K562 (cell line): ENCODE measurements at regions of chr6 and their contacts with region 1.

Region 1: DNA sequence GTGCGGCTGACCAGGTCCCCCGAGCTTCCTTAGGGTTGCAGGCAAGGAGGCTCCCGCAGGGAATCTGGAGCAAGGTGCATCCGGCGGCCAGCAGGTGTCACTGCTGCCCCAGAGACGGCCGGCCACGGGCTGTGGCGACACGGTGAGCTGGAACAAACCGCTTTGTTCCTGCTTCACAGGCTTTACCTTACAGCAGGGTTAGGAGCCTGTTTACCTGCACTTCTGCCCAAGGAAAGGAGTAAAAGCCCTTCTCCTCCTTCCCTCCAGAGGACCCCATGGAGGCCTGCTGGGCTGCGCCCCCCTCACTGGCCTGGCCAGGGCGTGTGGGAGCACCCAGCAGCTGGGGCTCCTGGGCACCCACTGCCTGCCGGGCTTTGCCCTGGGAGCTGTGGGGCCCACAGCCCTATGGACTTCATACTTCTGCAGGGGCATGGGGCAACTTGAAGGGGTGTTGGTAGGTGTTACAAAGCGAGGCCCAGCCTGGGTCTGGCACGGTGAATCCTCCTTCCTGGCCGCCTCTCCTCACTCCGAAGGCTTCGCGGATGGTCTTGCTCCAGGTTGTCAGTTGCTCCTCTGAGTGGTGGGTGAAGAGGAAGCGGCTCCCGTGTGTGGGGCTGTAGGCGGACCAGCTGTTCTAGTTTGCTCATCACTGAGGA is 88.4 kb downstream of the CDC5L start:
- DNase-seq: peak; percentile 91 to 92 (median 92)
- ATAC-seq: peak; percentile 87
- H3K4me3 ChIP-seq: no peak overlapping the region
- H3K27ac ChIP-seq: peak overlapping the region; percentile 48
- H3K4me1 ChIP-seq: peaks cover 35 to 47% of the 10 kb centered on the region in 2 experiments
- H3K27me3 ChIP-seq: peaks cover 21 to 36% of the 10 kb centered on the region in 2 experiments; a peak in 4 of 5 replicates
- CTCF ChIP-seq: peak; percentile 95 to 99 (median 98)
- EP300 ChIP-seq: peak; percentile 66
- POLR2A ChIP-seq: no peak
- RAD21 ChIP-seq: peak; percentile 97 to 99

Region 2: GRCh38 chr6:44569931-44570385 is 94.1 kb after region 1 on chr6:
- CTCF ChIA-PET with region 1: no interaction called
- POLR2A ChIA-PET with region 1: interaction called, 3 read pairs
- in situ Hi-C with region 1: no loop called
- intact Hi-C with region 1: loop called (anchors 10 kb)
- DNase-seq: no peak
- ATAC-seq: peak; percentile 40; the same call in 1 of the 3 replicates
- H3K4me3 ChIP-seq: no peak overlapping the region
- H3K27ac ChIP-seq: no peak overlapping the region
- H3K4me1 ChIP-seq: no peaks in the 10 kb centered on the region
- H3K27me3 ChIP-seq: peaks cover 0 to 12% of the 10 kb centered on the region in 2 experiments; a peak in 2 of 5 replicates
- CTCF ChIP-seq: no peak
- EP300 ChIP-seq: no peak
- POLR2A ChIP-seq: no peak
- RAD21 ChIP-seq: no peak

Region 3: GRCh38 chr6:44642870-44643529 is 167.1 kb after region 1 on chr6:
- CTCF ChIA-PET with region 1: no interaction called
- POLR2A ChIA-PET with region 1: interaction called, 5 read pairs
- in situ Hi-C with region 1: loop called (anchors 10 kb)
- intact Hi-C with region 1: loop called (anchors 5 kb)
- DNase-seq: peak in 1 of 4 experiments; percentile 26
- ATAC-seq: peak; percentile 57
- H3K4me3 ChIP-seq: no peak overlapping the region
- H3K27ac ChIP-seq: no peak overlapping the region
- H3K4me1 ChIP-seq: no peaks in the 10 kb centered on the region
- H3K27me3 ChIP-seq: peaks cover 24 to 49% of the 10 kb centered on the region in 2 experiments
- CTCF ChIP-seq: no peak
- EP300 ChIP-seq: no peak
- POLR2A ChIP-seq: no peak
- RAD21 ChIP-seq: no peak

Region 4: DNA sequence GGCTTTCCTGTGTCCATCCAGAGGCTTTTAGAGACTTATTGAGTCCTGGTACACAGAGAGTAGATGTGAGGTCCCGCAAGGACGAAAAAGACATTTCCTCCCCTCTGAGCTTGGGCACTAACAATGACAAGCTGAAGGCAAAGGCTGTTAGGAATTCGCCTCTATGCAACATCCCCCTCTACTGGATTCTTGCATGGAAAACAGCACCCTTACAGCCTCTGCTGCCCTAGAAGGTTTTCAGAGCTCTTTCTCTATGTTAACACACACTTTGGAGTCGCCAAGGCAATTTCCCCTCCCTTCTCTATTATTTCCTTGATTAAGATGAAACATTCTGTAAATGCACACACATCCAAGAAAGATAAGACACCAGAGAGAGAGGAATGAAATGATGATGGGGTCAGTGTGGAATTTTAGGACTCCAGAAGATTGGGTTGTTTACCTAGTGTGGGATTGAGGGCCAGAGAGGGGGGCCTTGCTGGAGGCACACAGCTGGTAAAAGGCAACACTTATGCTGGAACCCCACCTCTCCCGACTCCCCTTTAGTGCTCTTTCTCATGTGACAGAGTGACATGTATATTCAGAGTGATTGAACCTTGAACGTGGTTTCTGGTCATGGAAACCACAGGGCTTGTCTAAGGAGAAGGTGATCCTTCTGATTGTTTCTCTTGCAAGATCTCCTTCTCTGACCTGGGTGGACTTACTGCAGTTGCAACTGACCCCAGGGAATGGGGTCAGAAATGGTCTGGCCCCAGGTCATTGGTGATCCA is 1239.0 kb after region 1 on chr6:
- CTCF ChIA-PET with region 1: no interaction called
- POLR2A ChIA-PET with region 1: no interaction called
- in situ Hi-C with region 1: no loop called
- intact Hi-C with region 1: loop called (anchors 5 kb)
- DNase-seq: peak; percentile 20 to 69 (median 44)
- ATAC-seq: peak; percentile 94
- H3K4me3 ChIP-seq: no peak overlapping the region
- H3K27ac ChIP-seq: no peak overlapping the region
- H3K4me1 ChIP-seq: no peaks in the 10 kb centered on the region; a peak in 1 of 5 replicates
- H3K27me3 ChIP-seq: peaks cover 21 to 40% of the 10 kb centered on the region in 2 experiments
- CTCF ChIP-seq: peak; percentile 74 to 87 (median 77)
- EP300 ChIP-seq: no peak
- POLR2A ChIP-seq: no peak
- RAD21 ChIP-seq: peak; percentile 94 to 97

Region 5: DNA sequence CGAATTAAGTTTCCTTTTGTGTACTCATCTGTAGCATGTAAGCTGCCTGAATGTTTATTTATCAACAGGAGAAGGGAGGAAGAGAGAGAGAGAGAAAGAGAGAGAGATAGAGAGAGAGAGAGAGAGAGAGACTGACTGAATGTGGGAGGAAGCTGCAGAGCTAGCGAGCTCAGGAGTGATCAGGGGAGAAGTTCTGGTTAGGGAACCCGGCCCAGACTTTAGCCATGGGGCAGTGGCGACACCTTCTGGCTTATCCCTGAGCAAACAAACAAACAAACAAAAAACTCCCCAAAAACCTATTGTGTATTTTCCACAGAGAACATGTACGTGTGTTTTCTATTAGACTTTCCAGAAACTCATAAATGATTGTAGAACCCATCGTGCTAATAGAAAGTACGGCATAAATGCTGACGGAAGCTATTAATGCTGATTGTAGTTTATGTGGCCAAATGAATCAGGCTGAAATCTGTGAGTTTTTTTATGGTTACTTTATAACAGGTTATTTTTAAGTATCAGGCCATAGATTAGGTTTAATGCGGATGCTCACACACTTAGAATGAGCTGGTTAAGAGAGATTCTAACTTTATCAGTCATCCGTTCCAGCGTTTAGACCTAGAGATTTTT is 1446.9 kb after region 1 on chr6:
- CTCF ChIA-PET with region 1: no interaction called
- POLR2A ChIA-PET with region 1: interaction called, 3 read pairs
- in situ Hi-C with region 1: loop called (anchors 10 kb)
- intact Hi-C with region 1: loop called (anchors 5 kb)
- DNase-seq: peak; percentile 42 to 62 (median 46)
- ATAC-seq: peak; percentile 86
- H3K4me3 ChIP-seq: no peak overlapping the region
- H3K27ac ChIP-seq: no peak overlapping the region
- H3K4me1 ChIP-seq: no peaks in the 10 kb centered on the region
- H3K27me3 ChIP-seq: no peaks in the 10 kb centered on the region; a peak in 1 of 5 replicates
- CTCF ChIP-seq: peak; percentile 69 to 91 (median 80)
- EP300 ChIP-seq: no peak
- POLR2A ChIP-seq: no peak
- RAD21 ChIP-seq: peak; percentile 87 to 93